ENCODE measurements at regions of chr10 and their contacts with region 1.

Region 1: GRCh38 chr10:67849331-67850011 is 11.5 kb upstream of the DNAJC12 start:
- DNase-seq: peak; percentile 92
- CTCF ChIP-seq: no peak

Region 2: DNA sequence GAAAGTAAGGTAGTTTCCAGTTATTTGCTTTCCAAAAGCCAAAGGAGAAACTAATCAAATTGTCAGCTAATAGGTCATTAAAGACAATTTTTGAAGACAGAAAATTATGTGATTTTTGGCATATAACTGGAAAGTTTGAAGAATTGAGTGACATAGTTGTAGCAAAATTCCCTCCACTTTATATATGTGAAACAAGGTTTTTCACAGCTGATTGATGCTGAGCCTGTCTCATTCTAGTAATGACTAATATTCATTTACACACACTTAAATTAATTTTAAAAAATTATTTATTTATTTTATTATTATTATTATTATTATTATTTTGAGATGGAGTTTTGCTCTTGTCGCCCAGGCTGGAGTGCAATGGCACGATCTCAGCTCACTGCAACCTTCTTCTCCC is 18.7 kb after region 1 on chr10:
- CTCF ChIA-PET with region 1: interaction called, 20 read pairs
- POLR2A ChIA-PET with region 1: no interaction called
- DNase-seq: no peak
- CTCF ChIP-seq: no peak

Region 3: GRCh38 chr10:67884313-67884841 is 34.9 kb after region 1 on chr10 and contains the start of gene SIRT1:
- CTCF ChIA-PET with region 1: interaction called, 29 read pairs
- POLR2A ChIA-PET with region 1: no interaction called
- DNase-seq: peak; percentile 91
- CTCF ChIP-seq: no peak

Region 4: GRCh38 chr10:68208424-68209042 is 359.1 kb after region 1 on chr10:
- CTCF ChIA-PET with region 1: interaction called, 25 read pairs
- POLR2A ChIA-PET with region 1: no interaction called
- DNase-seq: peak; percentile 45
- CTCF ChIP-seq: peak; percentile 57

Region 5: GRCh38 chr10:68301790-68302502 is 452.5 kb after region 1 on chr10:
- CTCF ChIA-PET with region 1: interaction called, 39 read pairs
- POLR2A ChIA-PET with region 1: no interaction called
- DNase-seq: peak; percentile 45
- CTCF ChIP-seq: peak; percentile 42

Measured in GM10248 (cell line).